Mammary epithelial cell (primary cell): ENCODE measurements at regions of chr11 and their contacts with region 1.

Region 1: GRCh38 chr11:118838905-118839553 is 44.7 kb upstream of the CXCR5 start:
- DNase-seq: no peak
- H3K4me3 ChIP-seq: no peak overlapping the region
- H3K27ac ChIP-seq: no peak overlapping the region
- H3K4me1 ChIP-seq: peaks cover 5% of the 10 kb centered on the region
- H3K27me3 ChIP-seq: no peaks in the 10 kb centered on the region
- CTCF ChIP-seq: no peak

Region 2: DNA sequence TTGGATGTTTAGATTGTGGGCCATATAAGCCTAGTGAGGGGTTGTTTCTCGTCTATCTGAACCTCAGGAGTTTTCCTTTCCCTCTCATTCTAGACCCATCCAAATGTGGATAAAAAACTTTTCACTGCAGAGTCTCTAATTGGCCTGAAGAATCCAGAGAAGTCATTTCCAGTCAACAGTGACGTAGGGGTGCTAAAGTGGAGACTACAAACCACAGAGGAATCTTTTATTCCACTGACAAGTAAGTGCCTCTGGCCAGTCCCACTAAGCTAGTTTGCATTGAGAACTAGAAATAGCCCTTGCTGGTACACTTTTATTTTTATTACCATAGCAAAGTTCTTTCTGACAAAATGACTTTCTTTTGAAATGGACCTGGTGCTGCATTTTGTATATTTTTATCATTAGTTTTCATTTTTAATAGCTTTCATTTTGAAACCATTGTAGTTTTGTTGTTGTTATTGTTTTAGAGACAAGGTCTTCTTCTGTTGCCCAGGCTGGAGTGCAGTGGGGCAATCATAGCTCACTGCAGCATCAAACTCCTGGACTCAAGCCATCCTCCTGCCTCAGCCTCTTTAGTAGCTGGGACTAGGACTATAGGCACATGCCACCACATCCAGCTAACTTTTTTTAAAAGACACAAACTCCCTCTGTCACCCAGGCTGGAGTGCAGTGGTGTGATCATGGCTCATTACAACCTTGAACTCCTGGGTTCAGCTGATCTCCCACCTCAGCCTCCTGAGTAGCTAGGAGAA is 246.2 kb before region 1 on chr11:
- CTCF ChIA-PET with region 1: no interaction called
- dilution Hi-C with region 1: no loop called
- in situ Hi-C with region 1: no loop called
- intact Hi-C with region 1: no loop called
- DNase-seq: no peak
- H3K4me3 ChIP-seq: no peak overlapping the region
- H3K27ac ChIP-seq: no peak overlapping the region
- H3K4me1 ChIP-seq: no peaks in the 10 kb centered on the region
- H3K27me3 ChIP-seq: no peaks in the 10 kb centered on the region
- CTCF ChIP-seq: no peak

Region 3: DNA sequence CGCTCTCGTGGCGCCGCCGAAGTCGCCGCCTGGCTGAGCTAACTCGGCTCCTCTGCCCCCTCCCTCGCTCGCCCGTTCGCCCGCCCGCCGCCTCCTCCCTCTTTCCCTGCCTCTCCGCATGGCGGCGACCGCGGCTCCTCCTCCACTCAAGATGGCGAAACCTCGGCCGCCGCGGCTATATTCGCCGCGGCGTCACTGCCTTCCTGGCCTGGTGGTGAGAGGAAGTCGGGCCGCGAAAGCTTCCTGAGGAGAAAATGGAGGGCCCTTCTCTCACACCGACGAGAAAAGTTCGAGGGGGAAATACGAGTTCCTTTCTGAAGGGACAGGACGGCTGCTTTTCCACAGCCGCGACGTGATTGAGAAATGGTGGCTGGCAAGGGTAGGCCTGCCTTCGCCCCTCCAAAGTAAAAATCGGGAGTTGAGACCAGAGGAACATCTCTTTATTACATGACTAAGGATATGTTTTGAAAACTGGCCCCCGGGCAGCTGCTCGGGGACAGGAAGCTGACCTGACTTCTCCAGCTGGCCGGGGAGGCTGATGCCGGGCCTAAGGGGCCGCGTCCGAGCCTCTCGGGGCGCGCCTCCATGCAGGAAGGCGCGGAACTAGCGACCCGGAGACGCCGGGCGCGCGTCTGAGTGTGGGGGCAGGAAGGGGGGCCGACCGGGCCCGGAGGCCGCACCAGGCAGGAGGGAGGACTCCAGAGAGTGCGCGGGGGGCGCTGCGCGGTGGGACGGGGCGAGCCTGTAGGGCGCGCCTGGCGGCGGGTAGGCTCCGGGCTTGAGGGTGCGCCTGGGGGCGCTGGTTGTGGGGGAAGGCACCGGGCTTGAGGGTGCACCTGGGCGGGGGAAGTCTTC is 47.7 kb before region 1 on chr11 and contains the start of gene DDX6:
- CTCF ChIA-PET with region 1: no interaction called
- dilution Hi-C with region 1: loop called (anchors 5 kb)
- in situ Hi-C with region 1: no loop called
- intact Hi-C with region 1: no loop called
- DNase-seq: peak; percentile 81
- H3K4me3 ChIP-seq: peak within 1 kb of the TSS; percentile 90 to 95 (median 95)
- H3K27ac ChIP-seq: peak within 1 kb of the TSS; percentile 93
- H3K4me1 ChIP-seq: peaks cover 18% of the 10 kb centered on the region
- H3K27me3 ChIP-seq: no peaks in the 10 kb centered on the region
- CTCF ChIP-seq: peak in 1 of 2 donors; percentile 54
- total RNA-seq, gene DDX6: 96.8 to 162 TPM

Region 4: GRCh38 chr11:118820412-118821357 is 18.3 kb before region 1 on chr11:
- CTCF ChIA-PET with region 1: interaction called, 19 read pairs
- dilution Hi-C with region 1: no loop called
- in situ Hi-C with region 1: no loop called
- intact Hi-C with region 1: no loop called
- DNase-seq: peak; percentile 43
- H3K4me3 ChIP-seq: no peak overlapping the region
- H3K27ac ChIP-seq: peak overlapping the region; percentile 12
- H3K4me1 ChIP-seq: peaks cover 10% of the 10 kb centered on the region
- H3K27me3 ChIP-seq: no peaks in the 10 kb centered on the region
- CTCF ChIP-seq: no peak